ENCODE measurements at regions of chr20 and their contacts with region 1.

Region 1: GRCh38 chr20:54199721-54200176 is 8.1 kb upstream of the PFDN4 start:
- DNase-seq: peak; percentile 62 to 85
- ATAC-seq: peak; percentile 68 to 75
- H3K4me3 ChIP-seq: no peak overlapping the region
- H3K27ac ChIP-seq: peak overlapping the region; percentile 64 to 84; a peak in 5 of 6 replicates
- H3K4me1 ChIP-seq: peaks cover 39% of the 10 kb centered on the region
- CTCF ChIP-seq: peak; percentile 95
- EP300 ChIP-seq: no peak
- POLR2A ChIP-seq: no peak
- RAD21 ChIP-seq: peak; percentile 96 to 98

Region 2: DNA sequence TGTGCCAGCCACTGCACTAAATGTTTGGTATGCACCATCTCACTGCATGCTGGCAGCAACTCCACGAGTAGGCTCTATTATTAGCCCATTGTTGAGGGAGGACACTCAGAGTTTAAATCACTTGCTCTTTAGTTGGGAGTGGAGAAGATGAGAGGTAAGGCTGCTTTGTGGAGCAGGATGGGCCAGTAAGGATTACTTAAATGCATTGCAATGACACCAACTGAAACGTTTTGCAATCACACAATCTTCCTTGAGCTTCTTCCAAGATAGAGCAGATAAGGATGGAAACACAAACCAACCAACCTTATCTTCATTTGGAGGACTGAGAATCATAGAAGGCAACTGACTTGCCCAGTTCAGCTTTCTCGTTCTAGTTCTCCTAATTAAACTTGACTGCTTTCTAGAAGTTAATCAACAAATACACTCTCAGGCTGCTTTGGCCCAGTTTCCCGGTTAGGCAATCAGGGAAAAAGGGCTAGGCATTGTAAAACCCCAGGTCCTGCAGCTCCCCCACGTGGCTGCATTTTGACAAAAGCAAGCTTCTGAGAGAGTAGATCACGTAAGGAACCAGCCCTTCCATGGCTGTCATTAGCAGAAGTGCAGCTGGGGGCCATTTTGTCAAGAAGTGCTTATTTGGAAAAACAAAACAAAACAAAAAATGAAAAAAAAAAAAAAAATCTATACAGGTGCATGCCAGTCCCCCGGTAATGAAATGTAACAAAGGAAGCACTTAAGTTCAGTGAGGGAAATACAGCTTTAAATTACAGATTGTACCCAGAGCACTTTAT is 260.0 kb before region 1 on chr20:
- CTCF ChIA-PET with region 1: interaction called, 25 read pairs
- POLR2A ChIA-PET with region 1: no interaction called
- DNase-seq: peak; percentile 79 to 94
- ATAC-seq: peak; percentile 91 to 94
- H3K4me3 ChIP-seq: no peak overlapping the region
- H3K27ac ChIP-seq: peak overlapping the region; percentile 62 to 78
- H3K4me1 ChIP-seq: peaks cover 60% of the 10 kb centered on the region
- CTCF ChIP-seq: peak; percentile 92
- EP300 ChIP-seq: no peak; a peak in 1 of 5 replicates
- POLR2A ChIP-seq: no peak
- RAD21 ChIP-seq: peak; percentile 98 to 99

Region 3: DNA sequence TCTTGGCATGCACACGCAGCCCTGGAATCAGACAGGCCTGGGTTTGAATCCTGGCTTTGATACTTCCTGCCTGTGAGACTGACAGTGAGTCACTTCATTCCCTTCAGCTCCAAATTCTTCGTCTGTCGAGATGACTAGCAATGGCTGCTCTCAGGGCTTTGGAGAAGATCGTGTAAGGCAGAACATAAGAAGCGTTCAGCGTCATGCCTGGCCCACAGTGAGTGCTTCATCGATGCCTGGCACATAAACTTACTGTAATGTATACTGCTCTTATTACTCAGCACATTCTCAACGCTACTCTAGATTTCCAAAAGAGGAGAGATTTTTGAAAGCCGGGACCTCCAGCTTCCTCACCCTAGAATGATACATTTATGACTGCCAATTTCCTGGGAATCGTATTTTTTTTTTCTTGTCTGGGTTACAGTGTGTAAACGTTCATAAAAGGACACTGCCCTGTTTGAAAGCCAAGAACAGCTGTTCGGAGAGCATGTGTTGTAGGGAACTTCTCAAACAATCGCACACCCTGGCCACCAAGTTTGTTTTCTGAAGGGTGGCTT is 113.2 kb before region 1 on chr20:
- CTCF ChIA-PET with region 1: interaction called, 655 read pairs
- POLR2A ChIA-PET with region 1: no interaction called
- DNase-seq: no peak
- ATAC-seq: no peak
- H3K4me3 ChIP-seq: no peak overlapping the region
- H3K27ac ChIP-seq: peak overlapping the region; percentile 52 to 56; a peak in 5 of 6 replicates
- H3K4me1 ChIP-seq: peaks cover 53% of the 10 kb centered on the region
- CTCF ChIP-seq: no peak
- EP300 ChIP-seq: no peak
- POLR2A ChIP-seq: no peak
- RAD21 ChIP-seq: no peak

Region 4: DNA sequence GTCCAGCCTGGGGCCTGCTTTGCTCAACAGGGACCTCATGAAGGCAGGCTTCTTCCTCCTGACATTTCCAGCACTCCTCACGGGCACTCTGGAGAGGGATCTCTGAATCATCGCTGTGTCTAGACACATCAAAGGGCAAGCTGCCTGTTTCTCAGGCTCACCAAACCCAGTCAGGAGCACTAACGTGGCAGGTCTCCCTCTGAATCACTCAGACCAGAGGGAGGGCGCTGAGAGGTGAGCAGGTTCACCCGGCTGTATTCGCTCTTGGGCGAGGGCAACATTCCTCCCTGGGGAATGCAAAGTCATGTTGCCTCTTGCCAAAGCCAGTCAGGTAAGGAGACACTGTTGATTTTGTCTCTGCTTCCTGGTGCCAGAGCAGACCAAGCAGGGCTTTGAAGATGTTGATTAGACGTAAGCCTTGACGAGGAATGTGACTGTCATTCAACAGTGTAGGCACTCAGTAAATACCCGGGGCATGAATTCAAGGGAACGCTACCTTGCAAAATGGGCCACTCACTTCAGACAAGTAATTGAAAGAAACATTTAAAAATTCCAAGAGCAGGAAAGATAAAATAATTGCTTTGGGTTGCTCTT is 76.1 kb before region 1 on chr20:
- CTCF ChIA-PET with region 1: interaction called, 23 read pairs
- POLR2A ChIA-PET with region 1: no interaction called
- DNase-seq: peak; percentile 93 to 100
- ATAC-seq: peak; percentile 95 to 98
- H3K4me3 ChIP-seq: no peak overlapping the region
- H3K27ac ChIP-seq: peak overlapping the region; percentile 96 to 98
- H3K4me1 ChIP-seq: peaks cover 86% of the 10 kb centered on the region
- CTCF ChIP-seq: no peak
- EP300 ChIP-seq: peak; percentile 100
- POLR2A ChIP-seq: no peak
- RAD21 ChIP-seq: peak; percentile 44 to 60

Region 5: DNA sequence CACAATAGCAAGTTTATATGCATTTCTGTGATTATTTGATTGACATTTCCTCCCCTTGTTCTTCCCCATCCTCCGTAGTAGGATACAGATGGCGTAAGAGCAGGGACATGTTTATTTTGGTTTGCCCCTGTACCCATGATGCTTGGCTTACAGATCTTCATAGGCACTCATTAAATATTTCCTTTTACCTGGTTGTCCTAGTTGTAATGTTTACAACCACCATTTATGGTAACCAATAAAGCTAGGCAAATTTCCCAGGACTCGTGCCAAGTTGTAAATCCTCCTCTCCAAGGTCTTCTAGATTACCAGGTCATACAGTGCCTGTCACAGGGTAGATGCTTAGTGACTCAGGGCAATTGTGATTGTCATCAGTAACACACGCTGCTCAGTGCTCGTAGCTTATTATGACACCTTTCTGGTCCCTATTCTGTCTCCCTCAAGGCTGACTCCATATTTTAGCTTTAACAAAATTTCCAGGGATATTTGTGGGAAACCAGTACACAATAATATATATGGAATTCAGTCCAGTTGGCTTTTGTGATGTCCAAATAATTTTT is 50.7 kb before region 1 on chr20:
- CTCF ChIA-PET with region 1: interaction called, 15 read pairs
- POLR2A ChIA-PET with region 1: no interaction called
- DNase-seq: peak; percentile 88 to 99
- ATAC-seq: peak; percentile 52 to 67
- H3K4me3 ChIP-seq: no peak overlapping the region
- H3K27ac ChIP-seq: peak overlapping the region; percentile 86 to 93
- H3K4me1 ChIP-seq: peaks cover 80% of the 10 kb centered on the region
- CTCF ChIP-seq: no peak
- EP300 ChIP-seq: peak; percentile 80 to 89; a peak in 4 of 5 replicates
- POLR2A ChIP-seq: no peak
- RAD21 ChIP-seq: peak in 1 of 2 experiments; percentile 43; a peak in 2 of 5 replicates

Region 6: GRCh38 chr20:54173653-54174456 is 25.9 kb before region 1 on chr20 and contains the start of gene CYP24A1:
- CTCF ChIA-PET with region 1: interaction called, 97 read pairs
- POLR2A ChIA-PET with region 1: interaction called, 6 read pairs
- DNase-seq: peak; percentile 97 to 98
- ATAC-seq: peak; percentile 87
- H3K4me3 ChIP-seq: peak within 1 kb of the TSS; percentile 83
- H3K27ac ChIP-seq: peak within 1 kb of the TSS; percentile 93 to 100
- H3K4me1 ChIP-seq: peaks cover 43% of the 10 kb centered on the region
- CTCF ChIP-seq: no peak
- EP300 ChIP-seq: peak; percentile 92; a peak in 4 of 5 replicates
- POLR2A ChIP-seq: peak; percentile 100
- RAD21 ChIP-seq: no peak
- polyA plus RNA-seq, gene CYP24A1: 1,617 and 1,630 TPM in 2 replicates

Region 7: GRCh38 chr20:54250691-54251090 is 50.9 kb after region 1 on chr20:
- CTCF ChIA-PET with region 1: no interaction called
- POLR2A ChIA-PET with region 1: no interaction called
- DNase-seq: no peak
- ATAC-seq: peak; percentile 47 to 60; a peak in 3 of 6 replicates
- H3K4me3 ChIP-seq: no peak overlapping the region
- H3K27ac ChIP-seq: no peak overlapping the region
- H3K4me1 ChIP-seq: no peaks in the 10 kb centered on the region
- CTCF ChIP-seq: no peak
- EP300 ChIP-seq: no peak
- POLR2A ChIP-seq: no peak
- RAD21 ChIP-seq: no peak